Activated CD4-positive, alpha-beta memory T cell treated with anti-CD3 and anti-CD28 coated beads, Interleukin-2, amount 10 ng/mL, durations not matched to agents 7 days and 5 days (primary cell): ENCODE measurements at regions of chr17 and their contacts with region 1.

Region 1: DNA sequence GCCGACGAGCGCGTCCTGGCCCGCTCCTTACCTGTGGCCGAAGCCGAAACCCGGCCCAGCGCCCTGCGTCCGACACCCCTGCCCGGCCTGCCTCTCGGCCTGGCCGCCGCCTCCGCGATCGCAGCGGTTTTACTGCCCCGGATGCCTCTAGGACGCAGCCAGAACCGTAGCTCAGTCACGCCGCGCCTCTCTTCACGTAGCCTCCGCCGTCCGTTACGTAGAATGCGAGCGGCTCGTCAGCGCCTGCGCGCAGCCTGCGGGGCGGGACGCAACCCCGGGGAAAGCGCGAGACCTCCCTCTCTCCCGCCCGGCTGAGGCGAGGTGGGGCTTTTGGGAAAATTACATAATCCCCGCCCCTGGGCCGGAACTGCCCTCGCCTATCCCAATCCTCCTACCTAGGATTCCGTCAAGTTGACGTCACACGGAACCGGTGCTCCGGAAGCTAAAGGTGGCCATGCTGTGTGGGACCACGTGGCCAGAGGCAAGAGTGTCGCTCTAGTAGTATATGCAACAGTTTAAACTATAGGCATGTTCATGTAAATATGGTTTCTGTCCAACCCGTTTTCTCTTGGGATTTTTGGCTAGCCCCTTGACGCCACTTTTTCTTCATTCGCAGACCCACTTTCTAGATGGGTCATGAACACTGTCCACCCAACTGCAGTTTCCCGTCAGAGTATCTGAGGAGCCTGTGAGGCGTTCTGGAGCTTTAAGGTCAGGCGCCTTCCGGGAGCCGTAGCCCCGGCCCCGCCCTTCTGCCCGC is at the start of gene CCDC47:
- DNase-seq: peak; percentile 99
- H3K4me3 Mint-ChIP-seq: peak within 1 kb of the TSS; percentile 96
- H3K27ac Mint-ChIP-seq: peak within 1 kb of the TSS; percentile 99
- H3K4me1 Mint-ChIP-seq: peaks cover 54% of the 10 kb centered on the region
- H3K27me3 Mint-ChIP-seq: no peaks in the 10 kb centered on the region
- total RNA-seq, gene CCDC47: 56.7 to 57.9 TPM

Region 2: GRCh38 chr17:63697341-63698286 is 75.9 kb before region 1 on chr17:
- CTCF ChIA-PET with region 1: interaction called, 29 read pairs
- POLR2A ChIA-PET with region 1: interaction called, 178 read pairs
- DNase-seq: peak; percentile 89
- H3K4me3 Mint-ChIP-seq: peak overlapping the region; percentile 96
- H3K27ac Mint-ChIP-seq: peak overlapping the region; percentile 96
- H3K4me1 Mint-ChIP-seq: peaks cover 48% of the 10 kb centered on the region
- H3K27me3 Mint-ChIP-seq: no peaks in the 10 kb centered on the region

Region 3: DNA sequence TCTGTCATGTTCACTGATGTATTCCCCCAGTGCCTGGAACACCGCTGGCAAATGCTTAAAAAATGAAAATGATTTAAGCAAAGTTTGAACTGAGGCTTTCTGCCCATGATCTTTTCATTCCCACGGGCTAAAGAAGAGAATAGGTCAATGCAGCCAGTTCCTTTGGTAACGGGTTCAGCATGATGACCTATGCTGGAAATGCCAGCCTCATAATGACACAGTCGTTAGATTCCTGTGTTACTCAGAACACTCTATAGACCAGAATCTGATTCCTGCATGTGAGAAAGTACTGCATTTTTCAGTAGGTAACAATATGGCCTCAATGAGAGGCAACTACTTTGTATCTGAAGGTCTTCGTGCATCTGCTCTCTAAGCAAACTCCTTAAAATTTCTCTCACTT is 54.6 kb before region 1 on chr17:
- CTCF ChIA-PET with region 1: no interaction called
- POLR2A ChIA-PET with region 1: no interaction called
- DNase-seq: no peak
- H3K4me3 Mint-ChIP-seq: no peak overlapping the region
- H3K27ac Mint-ChIP-seq: no peak overlapping the region
- H3K4me1 Mint-ChIP-seq: peaks cover 1% of the 10 kb centered on the region
- H3K27me3 Mint-ChIP-seq: no peaks in the 10 kb centered on the region

Region 4: GRCh38 chr17:63741221-63742049 is 32.1 kb before region 1 on chr17 and contains the start of gene STRADA:
- CTCF ChIA-PET with region 1: interaction called, 12 read pairs
- POLR2A ChIA-PET with region 1: interaction called, 130 read pairs
- DNase-seq: peak; percentile 99
- H3K4me3 Mint-ChIP-seq: peak within 1 kb of the TSS; percentile 90
- H3K27ac Mint-ChIP-seq: peak within 1 kb of the TSS; percentile 93
- H3K4me1 Mint-ChIP-seq: peaks cover 33% of the 10 kb centered on the region
- H3K27me3 Mint-ChIP-seq: no peaks in the 10 kb centered on the region
- total RNA-seq, gene STRADA: 53.1 to 59.4 TPM

Region 5: GRCh38 chr17:63760771-63761539 is 12.6 kb before region 1 on chr17:
- CTCF ChIA-PET with region 1: interaction called, 3 read pairs
- POLR2A ChIA-PET with region 1: interaction called, 51 read pairs
- DNase-seq: no peak
- H3K4me3 Mint-ChIP-seq: no peak overlapping the region
- H3K27ac Mint-ChIP-seq: no peak overlapping the region
- H3K4me1 Mint-ChIP-seq: peaks cover 15% of the 10 kb centered on the region
- H3K27me3 Mint-ChIP-seq: no peaks in the 10 kb centered on the region

Region 6: DNA sequence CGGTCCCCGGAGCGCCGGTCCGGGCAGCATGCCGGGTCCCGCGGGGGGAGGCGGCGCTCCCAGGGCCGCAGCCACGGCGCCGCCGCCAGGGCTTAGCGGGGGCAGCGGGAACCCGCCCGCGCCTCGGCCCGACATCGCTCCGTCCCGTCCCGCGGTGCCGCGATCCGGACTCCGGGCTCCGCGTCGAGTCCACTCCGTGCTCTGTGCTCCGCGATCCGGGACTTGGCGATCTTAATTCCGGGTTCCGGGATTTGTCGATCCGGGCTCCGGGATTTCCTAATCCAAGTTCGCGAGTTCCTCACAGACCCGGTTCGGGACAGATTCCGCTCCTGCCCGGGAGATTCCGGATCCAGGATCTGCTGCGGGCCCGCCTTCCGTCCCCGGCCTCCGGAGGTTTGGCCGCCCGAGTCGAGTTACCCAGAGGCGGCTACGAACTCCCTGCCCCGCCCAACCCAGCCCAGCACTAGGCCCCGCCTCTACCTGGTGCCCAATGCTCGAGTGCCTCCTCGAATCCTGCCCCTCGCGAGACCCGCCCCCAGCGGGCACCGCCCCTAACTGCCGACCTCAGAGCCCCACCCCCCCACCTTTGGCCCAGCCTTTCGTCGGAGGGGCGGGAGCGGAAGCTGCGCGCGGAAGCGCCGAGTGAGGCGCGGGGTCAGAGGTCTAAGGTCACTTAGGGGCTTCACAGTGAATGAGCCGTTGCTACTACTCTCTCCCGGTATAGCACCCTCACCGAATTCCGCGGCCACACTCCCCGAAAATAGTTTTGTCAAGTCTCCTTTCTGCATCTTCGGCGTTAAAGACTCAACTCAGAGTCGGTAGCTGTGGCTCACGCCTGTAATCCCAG is 69.2 kb after region 1 on chr17 and contains the start of gene SMARCD2:
- CTCF ChIA-PET with region 1: interaction called, 11 read pairs
- POLR2A ChIA-PET with region 1: interaction called, 20 read pairs
- DNase-seq: peak; percentile 99
- H3K4me3 Mint-ChIP-seq: peak within 1 kb of the TSS; percentile 97
- H3K27ac Mint-ChIP-seq: peak within 1 kb of the TSS; percentile 96
- H3K4me1 Mint-ChIP-seq: peaks cover 46% of the 10 kb centered on the region
- H3K27me3 Mint-ChIP-seq: no peaks in the 10 kb centered on the region
- total RNA-seq, gene SMARCD2: 150 to 152 TPM